HEK293 (cell line): ENCODE measurements at regions of chr17 and their contacts with region 1.

Region 1: DNA sequence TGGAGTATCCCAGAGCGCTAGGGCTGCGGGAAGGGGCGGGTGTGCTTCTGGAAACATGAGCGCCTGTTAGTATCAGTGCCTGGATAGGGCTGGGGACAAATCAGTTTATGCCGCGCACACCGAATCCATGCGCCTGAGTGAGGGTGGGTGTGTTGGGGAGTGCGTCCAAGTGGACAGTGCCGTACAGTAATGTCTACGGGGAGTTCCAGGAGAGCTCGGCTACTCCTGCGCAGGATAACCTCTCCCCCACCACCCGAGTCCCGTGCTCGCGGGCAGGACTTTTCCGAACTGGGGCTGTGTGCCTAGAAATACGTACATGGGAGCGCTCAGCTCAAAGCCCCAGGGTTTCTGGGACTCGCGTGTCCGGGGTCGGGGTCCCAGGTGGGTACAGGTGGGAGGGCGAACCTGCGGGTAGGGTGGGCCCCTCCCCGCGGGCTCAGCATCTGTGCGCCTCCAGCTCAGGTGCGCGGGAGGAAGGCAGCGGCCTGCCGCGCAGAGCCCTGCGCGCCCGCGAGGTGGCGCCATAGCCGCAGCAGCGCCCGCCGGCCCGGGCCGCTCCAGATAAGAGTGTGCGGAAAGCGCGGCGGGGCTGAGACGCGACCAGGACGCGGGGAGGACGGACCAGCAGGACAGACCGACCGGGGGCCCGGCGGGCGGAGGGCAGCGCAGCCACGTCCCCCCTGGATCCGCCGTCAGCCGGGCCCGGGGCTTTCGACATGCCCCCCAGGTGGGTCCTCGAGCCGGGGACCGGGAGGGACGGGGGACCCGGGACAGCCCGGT is at the start of gene HIC1:
- H3K4me3 ChIP-seq: peak within 1 kb of the TSS; percentile 48
- H3K27ac ChIP-seq: no peak within 1 kb of the TSS; the same call in 1 of the 2 replicates
- H3K4me1 ChIP-seq: peaks cover 5% of the 10 kb centered on the region; the same call in 1 of the 2 replicates
- CTCF ChIP-seq: peak; percentile 78

Region 2: DNA sequence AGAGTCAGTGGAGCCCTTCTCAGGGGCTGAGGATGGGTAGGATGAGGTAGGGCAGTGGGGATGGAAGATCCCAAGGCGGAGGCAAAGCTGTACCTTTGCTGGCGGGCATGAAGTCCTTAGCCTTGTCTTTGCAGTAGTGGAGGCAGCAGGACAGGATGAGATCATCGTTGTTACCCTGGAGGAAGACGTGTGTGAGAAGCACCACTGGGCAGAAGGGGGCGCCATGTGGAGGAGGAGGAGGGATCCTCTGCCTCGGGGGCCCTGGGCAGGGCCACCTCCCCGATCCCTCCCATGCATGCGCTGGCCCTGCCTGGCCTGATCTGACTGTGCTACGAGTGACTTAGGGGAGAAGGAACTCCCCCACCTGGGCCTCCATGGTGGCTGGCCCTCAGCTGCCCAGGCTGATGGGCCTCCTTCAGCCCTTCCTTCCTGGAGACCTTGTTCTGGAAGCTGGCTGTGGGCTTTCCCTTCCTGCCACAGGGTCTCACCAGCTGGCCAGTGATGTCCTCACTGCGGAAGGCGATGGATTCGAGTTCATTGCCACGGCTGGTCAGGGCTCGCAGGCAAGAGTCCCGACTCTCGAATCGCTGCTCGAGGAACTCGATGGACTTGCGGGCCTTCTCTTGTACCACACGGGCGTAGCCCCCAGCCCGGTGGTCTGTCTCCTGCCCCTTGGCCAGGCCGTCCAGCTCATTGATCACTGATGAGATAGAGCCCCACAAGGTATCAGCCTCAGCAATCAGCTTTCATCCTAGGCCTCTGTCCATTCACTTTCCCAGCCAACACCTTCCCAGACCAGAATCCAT is 10.5 kb after region 1 on chr17:
- CTCF ChIA-PET with region 1: interaction called, 27 read pairs
- POLR2A ChIA-PET with region 1: no interaction called
- H3K4me3 ChIP-seq: no peak overlapping the region
- H3K27ac ChIP-seq: 0 out of 2 replicates have a peak overlapping the region, but pooled peaks have one; percentile 31
- H3K4me1 ChIP-seq: no peaks in the 10 kb centered on the region; the same call in 1 of the 2 replicates
- CTCF ChIP-seq: peak; percentile 77

Region 3: GRCh38 chr17:2170023-2170422 is 115.3 kb after region 1 on chr17:
- CTCF ChIA-PET with region 1: interaction called, 15 read pairs
- POLR2A ChIA-PET with region 1: no interaction called
- H3K4me3 ChIP-seq: no peak overlapping the region
- H3K27ac ChIP-seq: no peak overlapping the region
- H3K4me1 ChIP-seq: peaks cover 27% of the 10 kb centered on the region
- CTCF ChIP-seq: peak; percentile 47; the same call in 1 of the 2 replicates

Region 4: GRCh38 chr17:2233441-2233947 is 178.8 kb after region 1 on chr17:
- CTCF ChIA-PET with region 1: interaction called, 12 read pairs
- POLR2A ChIA-PET with region 1: no interaction called
- H3K4me3 ChIP-seq: no peak overlapping the region
- H3K27ac ChIP-seq: no peak overlapping the region
- H3K4me1 ChIP-seq: no peaks in the 10 kb centered on the region
- CTCF ChIP-seq: no peak

Region 5: DNA sequence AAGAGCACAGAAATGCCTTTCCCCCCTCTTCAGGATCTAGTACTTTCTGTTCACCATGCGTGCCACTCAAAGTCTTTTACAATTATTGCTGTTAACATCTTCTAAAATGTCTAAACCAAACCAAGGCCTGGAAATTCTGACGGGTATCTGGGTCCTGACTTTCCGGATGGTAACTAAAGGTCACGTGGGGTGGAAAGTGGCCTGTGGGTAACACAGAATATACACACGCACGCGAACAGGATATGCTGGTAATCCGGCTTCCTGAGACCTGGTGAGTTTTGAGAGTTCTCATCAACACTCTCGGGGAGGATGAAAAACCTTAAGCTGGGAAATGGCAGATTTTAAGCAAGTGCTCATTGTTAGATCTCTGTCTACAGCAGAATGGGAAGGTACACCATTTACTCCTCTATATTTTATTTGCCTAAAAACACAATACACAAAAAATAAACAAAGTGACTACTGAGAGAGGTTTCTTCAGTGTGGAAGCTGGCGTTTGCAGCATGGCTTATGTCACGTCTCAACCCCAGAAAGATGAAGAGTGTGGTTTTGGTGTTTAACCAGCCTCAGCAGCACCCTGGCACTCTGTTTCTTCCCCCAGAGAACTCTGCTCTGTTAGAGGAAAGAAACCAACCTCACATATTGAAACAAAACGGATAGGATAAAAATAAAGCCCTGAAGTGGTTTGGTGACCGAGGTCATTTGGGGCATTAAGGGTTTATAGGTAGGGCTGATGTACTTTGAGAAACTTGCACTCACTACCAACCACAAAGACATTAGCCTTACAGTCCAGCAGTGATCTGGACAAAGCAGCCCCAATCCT is 211.6 kb after region 1 on chr17:
- CTCF ChIA-PET with region 1: interaction called, 10 read pairs
- POLR2A ChIA-PET with region 1: interaction called, 3 read pairs
- H3K4me3 ChIP-seq: no peak overlapping the region
- H3K27ac ChIP-seq: no peak overlapping the region
- H3K4me1 ChIP-seq: peaks cover 14% of the 10 kb centered on the region
- CTCF ChIP-seq: no peak

Region 6: GRCh38 chr17:2282297-2282873 is 227.7 kb after region 1 on chr17:
- CTCF ChIA-PET with region 1: interaction called, 19 read pairs
- POLR2A ChIA-PET with region 1: no interaction called
- H3K4me3 ChIP-seq: no peak overlapping the region
- H3K27ac ChIP-seq: no peak overlapping the region
- H3K4me1 ChIP-seq: no peaks in the 10 kb centered on the region
- CTCF ChIP-seq: peak; percentile 40; the same call in 1 of the 2 replicates

Region 7: GRCh38 chr17:2297023-2297422 is 242.3 kb after region 1 on chr17:
- CTCF ChIA-PET with region 1: interaction called, 11 read pairs
- POLR2A ChIA-PET with region 1: no interaction called
- H3K4me3 ChIP-seq: no peak overlapping the region
- H3K27ac ChIP-seq: no peak overlapping the region
- H3K4me1 ChIP-seq: no peaks in the 10 kb centered on the region
- CTCF ChIP-seq: no peak

Region 8: GRCh38 chr17:2468270-2468669 is 413.6 kb after region 1 on chr17:
- CTCF ChIA-PET with region 1: no interaction called
- POLR2A ChIA-PET with region 1: no interaction called
- H3K4me3 ChIP-seq: no peak overlapping the region
- H3K27ac ChIP-seq: no peak overlapping the region
- H3K4me1 ChIP-seq: no peaks in the 10 kb centered on the region
- CTCF ChIP-seq: no peak